ENCODE measurements at regions of chr15 and their contacts with region 1.

Region 1: GRCh38 chr15:57340682-57341259 is 35.5 kb upstream of the CGNL1 start:
- DNase-seq: peak; percentile 61
- ATAC-seq: peak; percentile 68
- H3K4me3 Mint-ChIP-seq: no peak overlapping the region
- H3K27ac Mint-ChIP-seq: no peak overlapping the region
- H3K4me1 Mint-ChIP-seq: peaks cover 14% of the 10 kb centered on the region
- H3K27me3 Mint-ChIP-seq: no peaks in the 10 kb centered on the region
- CTCF ChIP-seq: peak; percentile 83

Region 2: DNA sequence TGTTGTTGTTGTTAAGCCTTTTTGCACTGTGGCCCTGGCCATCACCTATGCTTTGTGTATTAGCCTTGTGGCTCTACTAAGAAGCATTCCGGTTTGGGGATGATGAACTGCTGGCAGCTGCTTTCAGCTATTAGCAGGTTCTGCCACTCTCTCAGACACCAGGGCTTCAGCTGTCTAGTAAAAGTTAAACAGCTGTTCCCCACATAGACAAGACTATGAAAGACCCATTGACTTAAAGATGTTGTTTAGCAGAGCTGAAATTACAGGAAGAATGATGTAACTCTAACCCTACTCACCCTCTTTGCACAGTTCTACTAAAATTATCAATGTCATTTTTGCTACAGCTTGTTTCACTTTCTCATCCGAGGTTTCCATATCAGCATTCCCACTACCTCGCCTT is 95.6 kb before region 1 on chr15:
- CTCF ChIA-PET with region 1: no interaction called
- POLR2A ChIA-PET with region 1: no interaction called
- DNase-seq: no peak
- ATAC-seq: no peak
- H3K4me3 Mint-ChIP-seq: no peak overlapping the region
- H3K27ac Mint-ChIP-seq: peak overlapping the region; percentile 21; the same call in 1 of the 2 replicates
- H3K4me1 Mint-ChIP-seq: peaks cover 7% of the 10 kb centered on the region; the same call in 1 of the 2 replicates
- H3K27me3 Mint-ChIP-seq: no peaks in the 10 kb centered on the region
- CTCF ChIP-seq: no peak

Region 3: GRCh38 chr15:57281321-57281720 is 59.5 kb before region 1 on chr15:
- CTCF ChIA-PET with region 1: no interaction called
- POLR2A ChIA-PET with region 1: no interaction called
- DNase-seq: peak; percentile 42
- ATAC-seq: peak; percentile 80
- H3K4me3 Mint-ChIP-seq: peak overlapping the region; percentile 30; the same call in 1 of the 2 replicates
- H3K27ac Mint-ChIP-seq: peak overlapping the region; percentile 30; the same call in 1 of the 2 replicates
- H3K4me1 Mint-ChIP-seq: peaks cover 43% of the 10 kb centered on the region
- H3K27me3 Mint-ChIP-seq: no peaks in the 10 kb centered on the region
- CTCF ChIP-seq: no peak

Region 4: GRCh38 chr15:57356636-57357035 is 15.9 kb after region 1 on chr15:
- CTCF ChIA-PET with region 1: interaction called, 26 read pairs
- POLR2A ChIA-PET with region 1: no interaction called
- DNase-seq: no peak
- ATAC-seq: peak; percentile 92
- H3K4me3 Mint-ChIP-seq: no peak overlapping the region
- H3K27ac Mint-ChIP-seq: peak overlapping the region; percentile 6; the same call in 1 of the 2 replicates
- H3K4me1 Mint-ChIP-seq: peaks cover 52% of the 10 kb centered on the region
- H3K27me3 Mint-ChIP-seq: peaks cover 5% of the 10 kb centered on the region
- CTCF ChIP-seq: no peak

Region 5: DNA sequence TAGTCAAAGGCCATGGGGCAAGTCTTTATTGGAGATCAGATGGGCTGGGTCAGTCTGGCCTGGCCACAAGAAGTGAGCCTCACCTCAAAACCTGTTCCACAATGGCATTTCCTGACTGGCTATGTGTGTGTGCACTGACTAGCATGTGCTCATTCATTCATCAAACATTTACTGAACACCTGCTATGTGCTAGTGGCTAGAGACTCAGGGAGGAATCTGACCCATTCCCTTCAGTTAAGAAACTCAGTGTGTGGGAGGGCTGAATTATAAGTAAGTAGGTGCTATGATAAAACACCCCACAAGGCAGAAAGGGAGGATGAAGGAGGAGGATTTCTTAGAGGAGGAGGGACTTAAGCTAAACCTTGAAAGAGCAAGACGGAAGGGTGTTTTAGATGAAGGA is 30.2 kb after region 1 on chr15:
- CTCF ChIA-PET with region 1: interaction called, 19 read pairs
- POLR2A ChIA-PET with region 1: no interaction called
- DNase-seq: no peak
- ATAC-seq: no peak
- H3K4me3 Mint-ChIP-seq: no peak overlapping the region
- H3K27ac Mint-ChIP-seq: 0 out of 2 replicates have a peak overlapping the region, but pooled peaks have one; percentile 55
- H3K4me1 Mint-ChIP-seq: peaks cover 15% of the 10 kb centered on the region
- H3K27me3 Mint-ChIP-seq: peaks cover 24% of the 10 kb centered on the region
- CTCF ChIP-seq: no peak

Region 6: DNA sequence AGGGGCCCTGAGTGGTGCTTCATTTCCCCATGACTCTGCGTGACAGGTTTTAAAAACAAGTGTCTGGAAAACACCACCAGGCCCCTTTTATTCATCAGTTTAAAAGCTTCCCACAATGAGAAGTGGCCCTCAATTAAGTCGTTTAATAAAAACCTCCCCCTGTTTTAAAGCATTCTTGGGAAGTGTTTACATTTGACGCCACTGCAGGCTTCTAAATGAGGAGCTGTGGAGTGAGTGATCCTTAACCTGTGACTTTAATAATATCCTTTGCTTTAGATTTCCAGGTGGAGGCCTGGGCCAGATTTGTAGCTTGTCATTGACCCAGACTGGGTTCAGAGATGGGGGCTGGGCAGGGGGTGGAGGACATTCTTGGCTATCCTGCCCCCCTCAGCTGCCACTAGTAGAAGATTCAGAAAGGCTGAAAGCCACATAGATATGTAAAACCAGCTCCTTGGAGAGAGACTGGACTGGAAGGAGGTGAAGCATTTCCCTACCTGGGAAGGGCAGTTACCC is 46.8 kb after region 1 on chr15:
- CTCF ChIA-PET with region 1: interaction called, 16 read pairs
- POLR2A ChIA-PET with region 1: no interaction called
- DNase-seq: peak; percentile 59
- ATAC-seq: peak; percentile 71
- H3K4me3 Mint-ChIP-seq: peak overlapping the region; percentile 74
- H3K27ac Mint-ChIP-seq: peak overlapping the region; percentile 97
- H3K4me1 Mint-ChIP-seq: peaks cover 93% of the 10 kb centered on the region
- H3K27me3 Mint-ChIP-seq: no peaks in the 10 kb centered on the region
- CTCF ChIP-seq: no peak

Region 7: DNA sequence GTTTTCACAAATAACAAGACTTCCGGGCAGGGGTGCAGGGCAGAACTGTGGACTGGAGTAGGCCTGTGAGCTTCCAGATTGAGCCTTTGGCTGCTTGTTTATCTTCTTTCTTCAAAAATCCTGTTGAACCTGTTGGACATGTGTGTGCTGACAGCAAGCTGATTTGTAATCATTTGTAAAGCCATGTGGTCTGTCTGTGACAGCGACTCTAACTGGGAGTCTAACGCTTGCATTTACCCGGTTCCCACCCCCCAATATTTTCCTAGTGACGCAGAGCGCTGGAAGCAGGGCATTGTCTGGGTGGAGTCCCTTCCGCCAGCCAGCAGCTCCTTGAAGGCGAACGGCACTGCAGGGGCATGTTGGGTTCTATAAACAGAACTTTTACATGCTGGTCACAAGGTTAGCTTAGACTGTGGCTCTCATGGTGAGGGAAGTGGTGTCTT is 165.2 kb after region 1 on chr15:
- CTCF ChIA-PET with region 1: interaction called, 81 read pairs
- POLR2A ChIA-PET with region 1: no interaction called
- DNase-seq: no peak
- ATAC-seq: peak; percentile 11
- H3K4me3 Mint-ChIP-seq: no peak overlapping the region
- H3K27ac Mint-ChIP-seq: peak overlapping the region; percentile 31; the same call in 1 of the 2 replicates
- H3K4me1 Mint-ChIP-seq: peaks cover 52% of the 10 kb centered on the region
- H3K27me3 Mint-ChIP-seq: no peaks in the 10 kb centered on the region
- CTCF ChIP-seq: no peak

Region 8: GRCh38 chr15:57534281-57534680 is 193.5 kb after region 1 on chr15:
- CTCF ChIA-PET with region 1: interaction called, 140 read pairs
- POLR2A ChIA-PET with region 1: no interaction called
- DNase-seq: no peak
- ATAC-seq: peak; percentile 89
- H3K4me3 Mint-ChIP-seq: no peak overlapping the region
- H3K27ac Mint-ChIP-seq: peak overlapping the region; percentile 67
- H3K4me1 Mint-ChIP-seq: peaks cover 22% of the 10 kb centered on the region
- H3K27me3 Mint-ChIP-seq: no peaks in the 10 kb centered on the region
- CTCF ChIP-seq: no peak

Measured in WTC11 (cell line).